ENCODE measurements at regions of chr11 and their contacts with region 1.

Region 1: GRCh38 chr11:62208785-62209144 is 292 bp downstream of the SCGB2A1 start:
- DNase-seq: no peak
- H3K4me3 Mint-ChIP-seq: no peak overlapping the region
- H3K27ac Mint-ChIP-seq: no peak overlapping the region
- H3K4me1 Mint-ChIP-seq: no peaks in the 10 kb centered on the region
- H3K27me3 Mint-ChIP-seq: peaks cover 46% of the 10 kb centered on the region
- CTCF ChIP-seq: no peak

Region 2: DNA sequence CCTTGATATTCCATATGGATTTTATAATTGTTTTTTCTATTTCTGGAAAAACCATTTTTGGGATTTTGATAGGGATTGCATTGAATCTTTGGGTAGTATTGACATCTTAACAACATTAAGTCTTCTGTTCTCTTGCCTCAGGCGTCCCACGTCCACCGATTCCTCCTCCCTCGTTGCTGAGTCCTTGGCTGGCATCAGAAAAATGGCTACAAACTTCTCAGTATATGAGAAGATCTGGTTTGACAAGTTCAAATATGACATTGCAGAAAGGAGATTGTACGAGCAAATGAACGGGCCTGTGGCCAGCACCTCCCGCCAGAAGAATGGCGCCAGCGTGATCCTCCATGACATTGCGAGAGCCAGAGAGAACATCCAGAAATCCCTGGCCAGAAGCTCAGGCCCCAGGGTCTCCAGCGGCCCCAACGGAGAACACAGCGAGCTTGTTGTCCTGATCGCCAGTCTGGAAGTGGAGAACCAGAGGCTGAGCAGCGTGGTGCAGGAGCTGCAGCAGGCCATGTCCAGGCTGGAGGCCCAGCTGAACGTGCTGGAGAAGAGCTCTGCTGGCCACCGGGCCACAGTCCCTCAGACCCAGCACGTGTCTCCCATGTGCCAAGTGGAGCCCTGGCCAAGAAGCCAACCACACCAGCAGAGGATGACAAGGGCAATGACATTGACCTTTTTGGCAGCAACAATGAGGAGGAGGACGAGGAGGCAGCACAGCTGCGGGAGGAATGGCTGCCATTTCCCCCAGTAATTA is 39.5 kb before region 1 on chr11:
- CTCF ChIA-PET with region 1: no interaction called
- intact Hi-C with region 1: loop called (anchors 1 kb)
- DNase-seq: no peak
- H3K4me3 Mint-ChIP-seq: no peak overlapping the region
- H3K27ac Mint-ChIP-seq: no peak overlapping the region
- H3K4me1 Mint-ChIP-seq: peaks cover 13% of the 10 kb centered on the region
- H3K27me3 Mint-ChIP-seq: peaks cover 95% of the 10 kb centered on the region
- CTCF ChIP-seq: no peak

Region 3: GRCh38 chr11:62324738-62325556 is 116.2 kb after region 1 on chr11:
- CTCF ChIA-PET with region 1: no interaction called
- intact Hi-C with region 1: no loop called
- DNase-seq: no peak
- H3K4me3 Mint-ChIP-seq: no peak overlapping the region
- H3K27ac Mint-ChIP-seq: no peak overlapping the region
- H3K4me1 Mint-ChIP-seq: peaks cover 22% of the 10 kb centered on the region
- H3K27me3 Mint-ChIP-seq: no peaks in the 10 kb centered on the region
- CTCF ChIP-seq: peak; percentile 20

Region 4: GRCh38 chr11:62573592-62574362 is 365.0 kb after region 1 on chr11 and contains the start of gene EEF1G:
- CTCF ChIA-PET with region 1: no interaction called
- intact Hi-C with region 1: no loop called
- DNase-seq: peak; percentile 98
- H3K4me3 Mint-ChIP-seq: peak within 1 kb of the TSS; percentile 96
- H3K27ac Mint-ChIP-seq: peak within 1 kb of the TSS; percentile 99
- H3K4me1 Mint-ChIP-seq: peaks cover 51% of the 10 kb centered on the region
- H3K27me3 Mint-ChIP-seq: no peaks in the 10 kb centered on the region
- CTCF ChIP-seq: no peak
- total RNA-seq, gene EEF1G: 970 and 1,189 TPM in 2 replicates

Region 5: GRCh38 chr11:62771144-62772021 is 562.6 kb after region 1 on chr11 and contains the start of gene TAF6L:
- CTCF ChIA-PET with region 1: no interaction called
- intact Hi-C with region 1: no loop called
- DNase-seq: peak; percentile 92
- H3K4me3 Mint-ChIP-seq: peak within 1 kb of the TSS; percentile 98
- H3K27ac Mint-ChIP-seq: peak within 1 kb of the TSS; percentile 99
- H3K4me1 Mint-ChIP-seq: peaks cover 14% of the 10 kb centered on the region
- H3K27me3 Mint-ChIP-seq: no peaks in the 10 kb centered on the region
- CTCF ChIP-seq: no peak
- total RNA-seq, gene TAF6L: 26.0 and 28.9 TPM in 2 replicates

Measured in Calu3 (cell line).